PC-3 (cell line): ENCODE measurements at regions of chr5 and their contacts with region 1.

Region 1: DNA sequence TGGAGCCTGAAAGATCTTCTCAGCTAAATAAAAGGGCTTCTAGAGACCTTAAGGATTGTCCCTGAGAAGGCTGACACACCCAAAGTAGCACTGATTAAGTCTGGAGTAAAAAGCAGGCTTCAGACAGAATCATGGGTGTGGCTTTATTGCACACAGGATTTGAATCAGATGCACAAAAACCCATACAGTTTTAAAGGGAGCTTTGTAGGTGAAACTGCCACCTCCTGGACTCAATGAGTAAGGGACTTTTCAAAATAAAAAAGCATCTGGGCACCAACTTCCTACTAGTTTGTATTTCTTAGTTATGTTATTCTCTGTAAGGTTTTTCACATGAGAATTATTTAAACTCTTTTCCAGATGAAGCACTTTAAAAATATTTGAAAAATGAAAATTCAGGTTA is 129.4 kb downstream of the EDIL3 start:
- DNase-seq: peak; percentile 67
- ATAC-seq: peak; percentile 55
- H3K4me3 ChIP-seq: no peak overlapping the region
- H3K27ac ChIP-seq: no peak overlapping the region
- H3K4me1 ChIP-seq: peaks cover 10% of the 10 kb centered on the region
- H3K27me3 ChIP-seq: no peaks in the 10 kb centered on the region
- CTCF ChIP-seq: peak; percentile 63

Region 2: GRCh38 chr5:84088995-84089394 is 166.3 kb before region 1 on chr5:
- CTCF ChIA-PET with region 1: no interaction called
- POLR2A ChIA-PET with region 1: no interaction called
- intact Hi-C with region 1: loop called (anchors 1 kb)
- DNase-seq: peak; percentile 63
- ATAC-seq: 0 out of 2 replicates have a peak, but pooled peaks have one; percentile 31
- H3K4me3 ChIP-seq: no peak overlapping the region
- H3K27ac ChIP-seq: no peak overlapping the region
- H3K4me1 ChIP-seq: peaks cover 21% of the 10 kb centered on the region
- H3K27me3 ChIP-seq: no peaks in the 10 kb centered on the region
- CTCF ChIP-seq: peak; percentile 72

Region 3: DNA sequence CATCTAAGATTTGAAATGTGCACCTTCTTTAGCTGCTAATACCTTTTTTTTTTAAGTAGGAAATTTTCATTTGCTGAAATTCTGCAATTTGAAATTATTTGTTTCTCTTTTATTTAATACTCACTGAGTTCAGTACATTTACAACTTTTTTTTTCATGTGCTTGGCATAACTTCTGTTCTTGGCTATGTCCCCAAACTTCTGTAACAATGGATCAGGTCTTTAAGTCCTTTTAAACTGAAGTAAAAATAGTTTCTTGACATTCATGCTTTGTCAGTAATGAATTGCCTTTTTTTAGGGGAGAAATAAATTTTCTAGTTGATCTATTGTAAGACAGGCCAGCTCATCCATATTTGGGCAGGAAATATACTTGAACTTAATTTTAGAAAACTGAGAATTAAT is 87.9 kb after region 1 on chr5:
- CTCF ChIA-PET with region 1: no interaction called
- POLR2A ChIA-PET with region 1: no interaction called
- intact Hi-C with region 1: no loop called
- DNase-seq: no peak
- ATAC-seq: no peak
- H3K4me3 ChIP-seq: no peak overlapping the region
- H3K27ac ChIP-seq: no peak overlapping the region
- H3K4me1 ChIP-seq: no peaks in the 10 kb centered on the region
- H3K27me3 ChIP-seq: no peaks in the 10 kb centered on the region
- CTCF ChIP-seq: no peak